Activated CD8-positive, alpha-beta T cell treated with anti-CD3 and anti-CD28 coated beads, Interleukin-2, amount 10 ng/mL, durations not matched to agents 7 days and 5 days (primary cell): ENCODE measurements at regions of chr17 and their contacts with region 1.

Region 1: GRCh38 chr17:49997791-49998703 is 3.0 kb upstream of the DLX3 start:
- DNase-seq: peak; percentile 92
- ATAC-seq: peak; percentile 86
- H3K4me3 Mint-ChIP-seq: no peak overlapping the region
- H3K27ac Mint-ChIP-seq: no peak overlapping the region
- H3K4me1 Mint-ChIP-seq: peaks cover 29% of the 10 kb centered on the region
- H3K27me3 Mint-ChIP-seq: peaks cover 57% of the 10 kb centered on the region

Region 2: DNA sequence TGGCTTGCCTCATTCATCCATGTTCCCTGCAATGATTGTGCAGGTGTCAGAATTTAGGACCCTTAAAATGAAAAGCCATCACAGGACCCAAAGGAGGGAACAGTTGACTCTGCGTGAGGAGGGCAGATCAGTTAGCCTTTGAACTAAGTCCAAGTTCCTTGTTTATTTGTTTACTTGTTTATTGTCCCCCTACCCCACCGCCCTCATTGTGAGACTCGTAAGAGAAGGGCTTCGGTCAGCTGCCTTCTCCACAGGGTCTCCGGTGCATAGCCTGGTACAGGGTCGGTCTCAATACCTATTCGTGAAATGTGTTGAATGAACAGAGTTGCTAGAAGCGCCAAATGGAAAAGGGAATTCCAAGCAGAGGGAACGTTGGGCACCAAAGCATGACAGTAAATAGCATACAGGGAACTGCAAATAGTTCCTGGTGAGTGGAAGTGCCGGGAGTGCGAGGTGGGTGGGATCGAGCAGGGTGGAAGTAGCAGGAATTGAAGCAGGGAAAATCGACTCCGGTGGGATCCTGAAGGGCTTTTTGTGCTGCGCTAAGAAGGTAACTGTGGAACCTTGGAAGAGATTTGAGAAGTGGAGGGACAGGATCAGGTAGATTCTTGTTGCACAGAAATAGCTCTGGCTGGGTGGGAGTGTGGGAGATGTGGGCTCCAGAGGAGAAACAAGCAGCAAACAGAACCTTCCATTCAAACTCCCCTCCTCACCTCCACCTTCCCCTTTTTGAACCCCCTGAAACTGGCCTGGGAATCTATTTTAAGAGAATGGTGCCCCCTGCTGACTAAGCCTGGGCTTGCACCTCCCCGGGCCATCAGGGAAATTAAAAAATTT is 303.0 kb before region 1 on chr17:
- CTCF ChIA-PET with region 1: interaction called, 13 read pairs
- POLR2A ChIA-PET with region 1: no interaction called
- DNase-seq: peak; percentile 84
- ATAC-seq: peak; percentile 23
- H3K4me3 Mint-ChIP-seq: peak overlapping the region; percentile 30
- H3K27ac Mint-ChIP-seq: peak overlapping the region; percentile 81
- H3K4me1 Mint-ChIP-seq: peaks cover 40% of the 10 kb centered on the region
- H3K27me3 Mint-ChIP-seq: no peaks in the 10 kb centered on the region

Region 3: DNA sequence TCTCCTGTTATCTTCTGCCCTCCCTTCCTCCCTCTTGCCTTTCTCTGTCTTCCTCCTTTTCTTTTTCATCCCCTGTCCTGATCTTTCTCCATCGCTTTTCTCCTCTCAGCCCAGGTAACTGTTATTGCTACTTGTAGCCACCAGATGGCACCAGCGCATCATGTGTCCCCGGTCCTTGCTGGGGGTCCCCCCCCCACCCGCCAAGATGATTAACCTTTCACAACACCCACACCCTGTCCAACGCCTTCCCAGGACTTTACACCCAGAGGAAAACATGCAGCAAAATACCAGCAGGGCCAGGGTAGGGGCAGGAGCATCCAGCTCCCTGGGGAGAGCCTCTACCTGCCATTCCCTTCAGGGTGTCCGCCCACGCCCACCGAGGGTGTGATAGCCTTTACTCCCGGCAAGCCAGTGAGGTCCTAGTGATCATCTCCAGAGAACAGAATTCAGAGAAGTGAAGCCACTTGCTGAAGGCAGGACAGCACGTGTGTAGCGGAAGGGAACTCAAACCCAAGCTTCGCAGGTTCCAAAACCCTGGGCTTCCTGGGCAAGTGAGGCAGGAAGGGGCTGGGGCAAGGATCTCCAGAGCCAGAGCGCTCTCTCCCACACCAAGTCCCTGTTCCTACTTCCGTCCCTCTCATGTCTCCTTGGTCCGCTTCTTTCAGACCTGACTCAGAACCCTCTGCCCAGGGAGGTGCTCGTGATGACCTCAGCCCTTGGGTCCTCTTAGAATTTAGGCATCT is 136.7 kb before region 1 on chr17:
- CTCF ChIA-PET with region 1: interaction called, 194 read pairs
- POLR2A ChIA-PET with region 1: no interaction called
- DNase-seq: peak; percentile 64
- ATAC-seq: peak; percentile 66
- H3K4me3 Mint-ChIP-seq: no peak overlapping the region
- H3K27ac Mint-ChIP-seq: no peak overlapping the region
- H3K4me1 Mint-ChIP-seq: no peaks in the 10 kb centered on the region
- H3K27me3 Mint-ChIP-seq: peaks cover 2% of the 10 kb centered on the region

Region 4: GRCh38 chr17:49899191-49899485 is 98.9 kb before region 1 on chr17:
- CTCF ChIA-PET with region 1: interaction called, 19 read pairs
- POLR2A ChIA-PET with region 1: no interaction called
- DNase-seq: no peak
- ATAC-seq: no peak
- H3K4me3 Mint-ChIP-seq: no peak overlapping the region
- H3K27ac Mint-ChIP-seq: no peak overlapping the region
- H3K4me1 Mint-ChIP-seq: no peaks in the 10 kb centered on the region
- H3K27me3 Mint-ChIP-seq: peaks cover 55% of the 10 kb centered on the region

Region 5: GRCh38 chr17:49972486-49973278 is 25.4 kb before region 1 on chr17:
- CTCF ChIA-PET with region 1: interaction called, 45 read pairs
- POLR2A ChIA-PET with region 1: interaction called, 5 read pairs
- DNase-seq: no peak
- ATAC-seq: no peak
- H3K4me3 Mint-ChIP-seq: no peak overlapping the region
- H3K27ac Mint-ChIP-seq: no peak overlapping the region
- H3K4me1 Mint-ChIP-seq: peaks cover 23% of the 10 kb centered on the region
- H3K27me3 Mint-ChIP-seq: peaks cover 78% of the 10 kb centered on the region

Region 6: DNA sequence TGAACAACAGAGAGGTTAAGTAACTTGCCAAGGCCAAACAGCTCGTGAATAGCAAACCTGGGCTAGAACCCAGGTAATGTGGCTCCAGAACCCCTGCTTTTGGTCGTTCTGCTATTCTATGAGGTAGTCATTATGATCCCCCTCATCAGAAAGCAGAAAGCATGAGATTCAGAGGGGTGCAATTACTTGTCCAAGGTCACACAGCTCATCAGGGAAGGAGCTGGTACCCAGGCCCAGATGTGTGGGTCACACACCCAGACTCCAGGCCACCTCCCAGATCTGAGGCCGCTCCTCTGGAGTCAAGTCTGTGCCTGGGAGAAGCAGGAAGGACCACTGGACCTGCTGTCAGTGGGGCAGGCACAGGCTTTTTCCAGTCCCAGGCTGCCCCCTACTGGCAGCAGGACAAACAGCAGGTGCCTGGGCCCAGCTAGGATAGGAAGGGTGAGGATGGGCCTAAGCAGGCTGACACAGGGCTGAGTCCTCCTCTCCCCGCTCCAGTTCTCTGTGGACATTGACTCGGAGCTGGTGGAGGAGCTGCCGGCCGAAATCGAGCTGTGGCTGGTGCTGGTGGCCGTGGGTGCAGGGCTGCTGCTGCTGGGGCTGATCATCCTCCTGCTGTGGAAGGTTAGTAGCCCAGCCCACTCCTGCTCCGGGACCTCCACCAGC is 89.3 kb after region 1 on chr17:
- CTCF ChIA-PET with region 1: interaction called, 11 read pairs
- POLR2A ChIA-PET with region 1: no interaction called
- DNase-seq: peak; percentile 84
- ATAC-seq: peak; percentile 84
- H3K4me3 Mint-ChIP-seq: no peak overlapping the region
- H3K27ac Mint-ChIP-seq: no peak overlapping the region
- H3K4me1 Mint-ChIP-seq: no peaks in the 10 kb centered on the region
- H3K27me3 Mint-ChIP-seq: no peaks in the 10 kb centered on the region